ENCODE measurements at regions of chr1 and their contacts with region 1.

Region 1: GRCh38 chr1:223123011-223123610 is 19.9 kb downstream of the TLR5 start:
- DNase-seq: no peak
- ATAC-seq: no peak
- H3K4me3 ChIP-seq: no peak overlapping the region
- H3K4me3 Mint-ChIP-seq: no peak overlapping the region
- H3K27ac ChIP-seq: no peak overlapping the region
- H3K27ac Mint-ChIP-seq: no peak overlapping the region
- H3K4me1 ChIP-seq: peaks cover 5% of the 10 kb centered on the region
- H3K4me1 Mint-ChIP-seq: peaks cover 8% of the 10 kb centered on the region in 2 donors
- H3K27me3 ChIP-seq: no peaks in the 10 kb centered on the region
- H3K27me3 Mint-ChIP-seq: peaks cover 11 to 12% of the 10 kb centered on the region in 2 donors
- CTCF ChIP-seq: no peak

Region 2: DNA sequence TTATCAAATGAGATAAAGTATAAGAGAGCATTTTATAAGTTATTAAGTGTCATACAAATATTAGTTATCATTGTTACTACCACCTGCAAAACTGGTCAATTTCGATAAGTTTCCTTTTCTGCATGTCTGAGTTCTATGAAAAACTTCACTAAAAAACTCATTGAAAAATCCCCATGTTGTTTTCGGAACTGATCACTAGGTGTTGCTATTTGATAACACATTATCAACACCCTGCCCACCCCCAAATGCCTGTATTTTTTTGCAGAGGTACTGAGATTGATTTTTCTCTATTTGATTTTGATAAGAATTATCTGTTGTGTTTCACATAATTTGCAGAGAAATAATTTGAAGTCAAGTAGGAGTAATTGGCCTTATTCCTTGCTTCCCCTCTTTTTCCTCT is 330.4 kb before region 1 on chr1:
- intact Hi-C with region 1: loop called (anchors 1 kb)
- DNase-seq: peak in 1 of 2 donors; percentile 53
- ATAC-seq: peak in 1 of 3 donors; percentile 30
- H3K4me3 ChIP-seq: no peak overlapping the region
- H3K4me3 Mint-ChIP-seq: no peak overlapping the region
- H3K27ac ChIP-seq: no peak overlapping the region
- H3K27ac Mint-ChIP-seq: no peak overlapping the region
- H3K4me1 ChIP-seq: no peaks in the 10 kb centered on the region
- H3K4me1 Mint-ChIP-seq: no peaks in the 10 kb centered on the region
- H3K27me3 ChIP-seq: no peaks in the 10 kb centered on the region
- H3K27me3 Mint-ChIP-seq: no peaks in the 10 kb centered on the region
- CTCF ChIP-seq: peak; percentile 35

Region 3: GRCh38 chr1:222914861-222915632 is 208.1 kb before region 1 on chr1:
- intact Hi-C with region 1: no loop called
- DNase-seq: no peak
- ATAC-seq: no peak
- H3K4me3 ChIP-seq: no peak overlapping the region
- H3K4me3 Mint-ChIP-seq: no peak overlapping the region
- H3K27ac ChIP-seq: no peak overlapping the region
- H3K27ac Mint-ChIP-seq: no peak overlapping the region
- H3K4me1 ChIP-seq: no peaks in the 10 kb centered on the region
- H3K4me1 Mint-ChIP-seq: peaks cover 0 to 6% of the 10 kb centered on the region in 2 donors
- H3K27me3 ChIP-seq: no peaks in the 10 kb centered on the region
- H3K27me3 Mint-ChIP-seq: no peaks in the 10 kb centered on the region
- CTCF ChIP-seq: no peak

Measured in natural killer cell (primary cell).